HCT116 (cell line): ENCODE measurements at regions of chr20 and their contacts with region 1.

Region 1: GRCh38 chr20:40293740-40294139 is 395.3 kb downstream of the MAFB start:
- DNase-seq: no peak
- ATAC-seq: no peak
- H3K4me3 ChIP-seq: no peak overlapping the region
- H3K27ac ChIP-seq: no peak overlapping the region
- H3K4me1 ChIP-seq: no peaks in the 10 kb centered on the region
- H3K27me3 ChIP-seq: peaks cover 1% of the 10 kb centered on the region; the same call in 1 of the 2 replicates
- CTCF ChIP-seq: no peak
- POLR2A ChIP-seq: no peak
- RAD21 ChIP-seq: no peak

Region 2: DNA sequence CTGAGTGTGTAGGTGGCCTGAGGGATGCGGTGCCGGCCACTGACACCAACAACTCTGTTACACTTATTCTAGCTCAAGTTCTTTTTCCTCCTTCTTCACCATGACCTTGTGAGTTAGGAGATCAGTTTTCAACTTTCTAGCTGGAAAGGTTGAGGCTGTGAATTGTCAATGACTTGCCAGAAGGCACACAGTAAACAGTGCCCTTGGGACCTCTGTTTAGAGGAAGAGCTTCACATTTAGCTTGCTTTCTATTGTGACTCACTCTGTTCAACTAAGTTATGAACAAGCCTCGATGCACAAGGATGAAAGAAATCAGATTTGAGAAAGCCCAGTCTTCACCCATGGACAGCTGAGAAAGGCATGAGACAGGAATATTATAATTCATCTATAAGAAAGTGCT is 60.3 kb before region 1 on chr20:
- CTCF ChIA-PET with region 1: no interaction called
- POLR2A ChIA-PET with region 1: no interaction called
- RAD21 ChIA-PET with region 1: no interaction called
- intact Hi-C with region 1: loop called (anchors 10 kb)
- DNase-seq: no peak
- ATAC-seq: no peak
- H3K4me3 ChIP-seq: no peak overlapping the region
- H3K27ac ChIP-seq: no peak overlapping the region
- H3K4me1 ChIP-seq: no peaks in the 10 kb centered on the region
- H3K27me3 ChIP-seq: peaks cover 4% of the 10 kb centered on the region; the same call in 1 of the 2 replicates
- CTCF ChIP-seq: no peak
- POLR2A ChIP-seq: no peak
- RAD21 ChIP-seq: no peak

Region 3: DNA sequence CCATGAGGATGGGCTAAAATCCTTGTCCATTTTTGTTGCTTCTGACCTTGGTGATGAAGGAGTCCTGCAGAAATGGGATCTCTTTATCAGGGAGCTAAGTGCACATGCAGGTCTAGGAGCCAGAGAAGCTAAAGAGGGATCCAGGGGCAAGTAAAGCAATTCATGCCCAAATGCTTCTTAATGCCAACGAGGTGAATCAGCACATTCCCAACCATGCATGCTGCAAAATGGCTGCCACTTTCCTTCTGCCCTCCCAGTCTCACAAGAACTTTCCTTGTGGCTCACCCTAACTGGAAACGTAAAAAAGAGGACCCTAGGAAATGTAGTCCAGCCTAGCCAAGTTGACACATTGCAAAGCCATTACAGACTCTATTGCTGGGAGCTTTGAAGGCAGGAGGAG is 96.9 kb after region 1 on chr20:
- CTCF ChIA-PET with region 1: no interaction called
- POLR2A ChIA-PET with region 1: no interaction called
- RAD21 ChIA-PET with region 1: no interaction called
- intact Hi-C with region 1: no loop called
- DNase-seq: no peak
- ATAC-seq: no peak
- H3K4me3 ChIP-seq: no peak overlapping the region
- H3K27ac ChIP-seq: no peak overlapping the region
- H3K4me1 ChIP-seq: no peaks in the 10 kb centered on the region
- H3K27me3 ChIP-seq: no peaks in the 10 kb centered on the region
- CTCF ChIP-seq: no peak
- POLR2A ChIP-seq: no peak
- RAD21 ChIP-seq: no peak